CD4-positive, alpha-beta memory T cell (primary cell): ENCODE measurements at regions of chr3 and their contacts with region 1.

Region 1: GRCh38 chr3:33131331-33132018 is 17.7 kb downstream of the CRTAP start:
- DNase-seq: peak in 4 of 5 donors; percentile 31 to 40 (median 35)
- H3K4me3 ChIP-seq: no peak overlapping the region
- H3K4me3 Mint-ChIP-seq: no peak overlapping the region
- H3K27ac ChIP-seq: no peak overlapping the region
- H3K27ac Mint-ChIP-seq: no peak overlapping the region
- H3K4me1 ChIP-seq: no peaks in the 10 kb centered on the region
- H3K4me1 Mint-ChIP-seq: peaks cover 0 to 8% (median 5%) of the 10 kb centered on the region in 4 donors
- H3K27me3 ChIP-seq: no peaks in the 10 kb centered on the region
- H3K27me3 Mint-ChIP-seq: no peaks in the 10 kb centered on the region

Region 2: DNA sequence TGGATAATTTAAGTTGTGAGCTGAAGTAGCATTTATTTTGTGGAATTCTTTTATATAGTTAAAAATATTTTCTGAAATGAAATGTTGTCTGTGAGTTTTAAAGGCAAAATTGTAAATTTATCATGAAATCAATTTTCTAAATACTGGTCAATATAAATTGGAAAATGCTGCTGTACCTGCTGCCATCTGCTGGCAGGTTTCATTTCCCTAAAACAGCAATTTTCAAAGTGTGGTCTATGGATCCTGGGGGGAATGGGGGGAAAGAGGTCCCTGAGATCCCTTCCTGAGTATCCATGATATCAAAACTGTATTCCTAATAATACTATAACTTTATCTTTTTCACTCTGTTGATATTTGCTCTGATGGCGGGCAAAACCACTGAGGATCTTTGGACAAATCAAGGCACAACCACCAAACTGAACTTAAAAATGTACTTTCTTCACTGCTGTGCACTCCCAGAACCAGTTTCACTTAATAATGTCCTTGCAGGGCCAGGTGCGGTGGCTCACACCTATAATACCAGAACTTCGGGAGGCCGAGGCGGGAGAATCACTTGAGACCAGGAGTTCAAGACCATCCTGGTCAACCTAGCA is 197.2 kb before region 1 on chr3:
- CTCF ChIA-PET with region 1: interaction called, 10 read pairs
- POLR2A ChIA-PET with region 1: no interaction called
- intact Hi-C with region 1: no loop called
- DNase-seq: no peak
- H3K4me3 ChIP-seq: no peak overlapping the region
- H3K4me3 Mint-ChIP-seq: no peak overlapping the region
- H3K27ac ChIP-seq: no peak overlapping the region
- H3K27ac Mint-ChIP-seq: no peak overlapping the region
- H3K4me1 ChIP-seq: no peaks in the 10 kb centered on the region
- H3K4me1 Mint-ChIP-seq: no peaks in the 10 kb centered on the region
- H3K27me3 ChIP-seq: no peaks in the 10 kb centered on the region
- H3K27me3 Mint-ChIP-seq: peaks cover 0 to 14% of the 10 kb centered on the region in 2 donors

Region 3: DNA sequence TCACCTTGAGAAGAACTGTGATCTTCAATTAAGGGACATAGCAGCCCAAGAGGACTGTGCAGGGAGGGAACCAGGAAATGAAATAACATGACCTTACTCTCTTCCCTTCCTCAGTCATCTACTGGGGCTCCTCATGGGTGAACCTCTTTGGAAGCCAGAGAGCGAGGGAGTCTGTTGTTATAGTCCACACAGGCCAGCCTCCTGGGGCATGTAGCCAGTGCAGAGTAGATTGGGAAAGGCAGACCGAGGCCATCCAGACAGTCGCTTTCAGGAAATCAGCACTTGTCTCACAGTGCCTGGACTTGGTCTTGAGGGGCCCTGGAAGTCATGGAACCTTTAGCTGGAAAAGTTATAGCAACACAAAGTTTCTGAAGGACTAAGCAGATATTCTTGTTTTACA is 11.6 kb before region 1 on chr3:
- CTCF ChIA-PET with region 1: interaction called, 20 read pairs
- POLR2A ChIA-PET with region 1: interaction called, 5 read pairs
- intact Hi-C with region 1: no loop called
- DNase-seq: no peak
- H3K4me3 ChIP-seq: no peak overlapping the region
- H3K4me3 Mint-ChIP-seq: no peak overlapping the region
- H3K27ac ChIP-seq: no peak overlapping the region
- H3K27ac Mint-ChIP-seq: peak overlapping the region in 4 of 7 donors; percentile 0 to 31 (median 20)
- H3K4me1 ChIP-seq: peaks cover 16% of the 10 kb centered on the region
- H3K4me1 Mint-ChIP-seq: peaks cover 21 to 43% (median 26%) of the 10 kb centered on the region in 4 donors
- H3K27me3 ChIP-seq: no peaks in the 10 kb centered on the region
- H3K27me3 Mint-ChIP-seq: no peaks in the 10 kb centered on the region

Region 4: DNA sequence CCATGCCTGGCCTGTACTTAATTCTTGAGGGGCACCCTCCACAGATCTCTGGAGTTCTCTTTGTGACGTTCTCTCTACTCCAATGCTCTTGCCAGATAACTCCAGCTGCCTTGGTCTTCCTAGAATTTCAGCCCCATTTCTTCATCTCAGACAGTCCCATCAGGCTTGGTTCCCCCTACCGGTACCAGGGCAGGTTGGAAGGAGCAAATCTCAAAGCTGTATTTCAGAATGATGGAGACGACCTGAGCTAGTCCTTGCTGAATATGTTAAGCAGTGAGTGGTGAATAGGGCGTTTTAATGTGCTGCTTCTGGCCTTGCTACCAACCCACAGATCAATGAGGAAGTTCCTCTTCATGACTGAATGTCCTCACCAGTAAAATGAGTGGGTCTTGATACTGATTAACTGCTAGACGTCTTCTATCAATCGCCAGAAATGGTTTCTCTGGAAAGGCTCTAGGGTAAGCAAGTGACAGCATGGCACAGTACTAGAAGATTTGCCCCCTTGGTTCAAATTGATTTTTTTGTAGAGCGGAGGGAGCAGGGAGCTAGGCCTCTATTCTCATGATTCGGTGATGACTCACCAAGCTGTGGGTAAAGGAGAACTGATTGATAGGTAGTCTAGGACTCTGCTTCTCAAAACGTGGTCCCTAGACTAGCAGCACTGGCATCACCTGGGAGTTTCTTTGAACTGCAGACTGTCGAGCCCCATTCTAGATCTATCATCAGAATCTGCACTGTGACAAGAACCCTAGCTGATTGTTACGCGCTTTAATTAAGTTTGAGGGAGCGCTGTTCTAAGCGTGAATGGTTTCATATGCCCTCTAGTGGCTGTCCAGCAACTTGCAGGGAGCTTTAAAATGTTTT is 241.0 kb after region 1 on chr3:
- CTCF ChIA-PET with region 1: interaction called, 45 read pairs
- POLR2A ChIA-PET with region 1: no interaction called
- intact Hi-C with region 1: loop called (anchors 1 kb)
- DNase-seq: peak; percentile 39 to 57 (median 49)
- H3K4me3 ChIP-seq: no peak overlapping the region
- H3K4me3 Mint-ChIP-seq: peak overlapping the region in 1 of 8 donors; percentile 7
- H3K27ac ChIP-seq: no peak overlapping the region
- H3K27ac Mint-ChIP-seq: peak overlapping the region in 1 of 7 donors; percentile 51
- H3K4me1 ChIP-seq: no peaks in the 10 kb centered on the region
- H3K4me1 Mint-ChIP-seq: peaks cover 2 to 7% (median 5%) of the 10 kb centered on the region in 4 donors
- H3K27me3 ChIP-seq: no peaks in the 10 kb centered on the region
- H3K27me3 Mint-ChIP-seq: peaks cover 11 to 12% of the 10 kb centered on the region in 2 donors

Region 5: DNA sequence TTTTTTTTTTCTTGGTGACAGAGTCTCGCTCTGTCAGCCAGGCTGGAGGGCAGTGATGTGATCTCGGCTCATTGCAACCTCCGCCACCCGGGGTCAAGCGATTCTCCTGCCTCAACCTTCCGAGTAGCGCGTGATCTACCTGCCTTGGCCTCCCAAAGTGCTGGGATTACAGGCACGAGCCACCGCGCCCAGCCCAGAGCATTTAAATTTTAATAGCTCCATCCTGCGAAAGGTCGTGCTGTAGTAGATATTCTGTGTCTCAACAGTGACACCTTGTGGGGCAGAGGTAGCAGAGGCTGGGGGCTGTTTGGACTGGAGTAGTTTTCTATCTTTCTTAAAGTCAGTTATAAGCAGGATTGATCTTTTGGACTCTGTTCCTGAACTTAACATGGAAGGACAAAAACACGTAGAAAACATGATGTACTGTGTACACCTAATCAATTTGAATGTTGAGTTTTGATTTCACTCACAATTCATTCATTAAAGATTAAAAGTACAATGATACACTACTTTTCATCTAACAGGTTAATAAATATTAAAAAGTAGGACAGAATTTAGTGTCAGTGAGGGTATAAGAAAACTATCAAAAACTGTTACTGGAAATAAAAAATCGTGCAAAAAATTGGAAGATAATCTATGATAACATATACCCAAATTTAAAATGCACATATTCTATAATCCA is 656.0 kb after region 1 on chr3:
- CTCF ChIA-PET with region 1: interaction called, 70 read pairs
- POLR2A ChIA-PET with region 1: no interaction called
- intact Hi-C with region 1: loop called (anchors 1 kb)
- DNase-seq: peak; percentile 52 to 65 (median 59)
- H3K4me3 ChIP-seq: no peak overlapping the region
- H3K4me3 Mint-ChIP-seq: peak overlapping the region in 4 of 8 donors; percentile 23 to 70 (median 30)
- H3K27ac ChIP-seq: no peak overlapping the region
- H3K27ac Mint-ChIP-seq: peak overlapping the region in 2 of 7 donors; percentile 21 to 37
- H3K4me1 ChIP-seq: peaks cover 4% of the 10 kb centered on the region
- H3K4me1 Mint-ChIP-seq: peaks cover 0 to 4% (median 2%) of the 10 kb centered on the region in 4 donors
- H3K27me3 ChIP-seq: no peaks in the 10 kb centered on the region
- H3K27me3 Mint-ChIP-seq: peaks cover 6 to 11% of the 10 kb centered on the region in 2 donors